SK-N-SH (cell line): ENCODE measurements at regions of chr5 and their contacts with region 1.

Region 1: GRCh38 chr5:50763846-50764245 is 97.4 kb downstream of the PARP8 start:
- DNase-seq: no peak
- H3K4me3 ChIP-seq: no peak overlapping the region
- H3K27ac ChIP-seq: no peak overlapping the region
- H3K4me1 ChIP-seq: peaks cover 0 to 9% of the 10 kb centered on the region in 2 experiments; a peak in 2 of 4 replicates
- H3K27me3 ChIP-seq: no peaks in the 10 kb centered on the region
- CTCF ChIP-seq: no peak
- EP300 ChIP-seq: no peak
- RAD21 ChIP-seq: no peak

Region 2: DNA sequence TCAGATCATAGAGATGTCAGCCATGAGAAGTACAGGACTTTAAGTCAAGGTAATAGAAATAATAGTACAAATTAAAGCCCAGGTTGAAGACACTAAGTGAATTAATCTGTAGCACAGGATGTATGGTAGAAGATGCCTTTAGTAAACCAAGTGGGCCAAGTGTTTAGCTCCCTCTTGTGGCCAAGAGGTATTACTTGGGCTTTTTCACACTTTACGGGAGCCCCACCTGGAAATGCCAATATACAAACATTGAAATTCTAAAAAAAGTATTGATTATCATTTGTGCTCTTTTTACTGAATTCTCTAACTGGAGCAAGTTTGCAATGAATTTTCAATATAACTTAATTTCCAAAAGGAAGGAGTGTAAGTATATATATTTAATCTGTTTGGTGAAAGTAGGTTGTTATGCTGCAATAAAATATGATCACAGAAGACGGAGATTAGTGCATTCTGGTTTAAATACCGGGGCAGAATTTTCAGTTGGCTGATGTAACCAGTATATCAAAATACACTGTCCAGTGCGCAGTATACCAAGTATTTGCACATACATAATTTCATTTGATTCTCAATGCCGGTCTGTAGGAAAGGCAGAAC is 12.7 kb before region 1 on chr5:
- CTCF ChIA-PET with region 1: interaction called, 12 read pairs
- POLR2A ChIA-PET with region 1: no interaction called
- DNase-seq: peak; percentile 48
- H3K4me3 ChIP-seq: peak overlapping the region in 1 of 2 experiments; percentile 6; a peak in 1 of 4 replicates
- H3K27ac ChIP-seq: no peak overlapping the region
- H3K4me1 ChIP-seq: no peaks in the 10 kb centered on the region
- H3K27me3 ChIP-seq: no peaks in the 10 kb centered on the region
- CTCF ChIP-seq: peak; percentile 96
- EP300 ChIP-seq: no peak
- RAD21 ChIP-seq: peak; percentile 86